A673 (cell line): ENCODE measurements at regions of chr14 and their contacts with region 1.

Region 1: GRCh38 chr14:105470804-105471610 is 3.6 kb upstream of the CRIP2 start:
- DNase-seq: peak; percentile 59
- H3K4me3 ChIP-seq: no peak overlapping the region
- H3K27ac ChIP-seq: peak overlapping the region; percentile 77
- H3K4me1 ChIP-seq: peaks cover 46% of the 10 kb centered on the region
- H3K27me3 ChIP-seq: no peaks in the 10 kb centered on the region
- CTCF ChIP-seq: peak; percentile 27; the same call in 1 of the 2 replicates

Region 2: DNA sequence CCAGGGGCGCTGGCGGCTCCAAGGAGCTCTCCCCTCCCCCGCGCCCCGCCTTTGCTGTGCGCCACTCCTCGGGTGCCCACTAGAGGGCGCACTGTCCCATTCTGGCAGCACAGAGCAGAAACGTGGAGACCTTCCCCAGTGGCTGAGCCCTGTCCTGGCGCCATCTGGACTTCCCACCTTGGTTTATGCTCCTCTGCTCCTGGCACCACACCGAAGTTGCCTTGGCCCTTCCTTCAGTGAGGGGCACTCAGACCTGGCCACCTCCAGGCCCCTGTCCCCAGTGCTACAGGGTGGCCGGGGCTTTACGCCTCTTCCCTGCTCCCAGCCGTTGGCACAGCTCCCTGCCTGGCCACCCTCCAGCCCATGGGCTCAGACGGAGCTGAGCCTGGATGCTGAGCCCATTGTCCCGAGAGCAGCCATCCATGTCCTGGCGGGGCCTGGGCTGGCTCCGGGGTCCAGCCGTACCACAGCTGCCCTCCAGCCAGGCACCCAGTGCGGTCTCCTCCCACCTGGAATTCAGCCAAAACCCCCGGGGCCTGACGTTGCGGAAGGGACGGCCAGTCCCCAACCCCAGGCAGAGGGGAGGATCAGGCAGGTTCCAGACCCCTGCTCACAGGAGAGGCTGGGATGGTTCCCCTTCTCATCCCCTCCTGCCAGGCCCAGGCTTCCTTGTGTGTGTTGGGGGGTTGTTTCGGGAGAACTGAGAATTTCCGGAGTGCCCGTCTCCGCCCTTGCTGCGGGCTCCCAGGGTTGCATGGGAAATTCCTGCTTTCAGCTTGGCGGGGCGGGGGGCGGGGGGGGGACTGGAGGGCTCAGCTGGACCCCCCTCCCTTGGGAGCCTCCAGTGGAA is 10.2 kb after region 1 on chr14:
- CTCF ChIA-PET with region 1: interaction called, 13 read pairs
- POLR2A ChIA-PET with region 1: no interaction called
- intact Hi-C with region 1: no loop called
- DNase-seq: peak; percentile 90
- H3K4me3 ChIP-seq: peak overlapping the region; percentile 46
- H3K27ac ChIP-seq: peak overlapping the region; percentile 91
- H3K4me1 ChIP-seq: peaks cover 42% of the 10 kb centered on the region
- H3K27me3 ChIP-seq: no peaks in the 10 kb centered on the region
- CTCF ChIP-seq: peak; percentile 99

Region 3: GRCh38 chr14:106174206-106174605 is 703.2 kb after region 1 on chr14:
- CTCF ChIA-PET with region 1: no interaction called
- POLR2A ChIA-PET with region 1: no interaction called
- intact Hi-C with region 1: no loop called
- DNase-seq: no peak
- H3K4me3 ChIP-seq: no peak overlapping the region
- H3K27ac ChIP-seq: no peak overlapping the region
- H3K4me1 ChIP-seq: no peaks in the 10 kb centered on the region
- H3K27me3 ChIP-seq: peaks cover 41% of the 10 kb centered on the region
- CTCF ChIP-seq: no peak